ENCODE measurements at regions of chr13 and their contacts with region 1.

Region 1: DNA sequence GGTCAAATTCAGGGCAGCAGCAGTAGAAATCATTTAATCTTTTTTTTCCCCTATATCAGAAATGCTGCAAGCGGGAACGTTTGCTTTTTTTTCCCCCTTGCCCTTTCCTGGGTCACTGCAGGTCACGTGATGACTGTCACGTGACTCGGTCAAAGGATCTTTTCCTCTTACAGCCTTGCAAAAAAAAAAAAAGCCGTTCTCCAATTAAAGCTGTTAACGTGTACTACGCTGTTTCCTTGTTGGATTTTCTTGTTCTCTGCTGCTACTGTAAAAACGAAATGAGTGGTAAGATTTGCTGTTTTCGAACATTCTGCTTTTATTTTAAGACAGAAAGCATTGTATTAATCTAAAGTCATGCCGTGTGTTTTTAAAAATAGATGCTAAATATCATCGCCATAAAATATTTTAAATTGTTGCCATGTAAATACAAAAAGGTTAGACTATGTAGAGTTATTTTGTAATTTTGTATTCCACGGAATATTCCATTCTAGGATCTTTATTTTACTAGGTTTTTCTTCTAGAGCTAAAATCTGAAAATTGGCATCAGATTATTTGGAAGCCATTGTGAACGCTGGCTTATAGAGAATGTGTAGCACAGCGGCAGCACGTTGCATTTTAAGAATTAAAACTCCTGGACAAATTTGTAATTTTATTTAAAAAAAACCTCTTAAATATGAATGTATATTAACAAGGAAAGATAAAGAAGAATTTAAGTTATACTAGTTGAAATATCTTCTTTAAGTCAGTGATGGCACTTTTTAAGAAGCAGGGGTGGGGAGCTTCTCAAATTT is 109.8 kb upstream of the MLNR start:
- DNase-seq: peak; percentile 93
- H3K4me3 Mint-ChIP-seq: peak overlapping the region; percentile 81
- H3K27ac Mint-ChIP-seq: peak overlapping the region; percentile 68
- H3K4me1 Mint-ChIP-seq: peaks cover 19% of the 10 kb centered on the region
- H3K27me3 Mint-ChIP-seq: no peaks in the 10 kb centered on the region

Region 2: DNA sequence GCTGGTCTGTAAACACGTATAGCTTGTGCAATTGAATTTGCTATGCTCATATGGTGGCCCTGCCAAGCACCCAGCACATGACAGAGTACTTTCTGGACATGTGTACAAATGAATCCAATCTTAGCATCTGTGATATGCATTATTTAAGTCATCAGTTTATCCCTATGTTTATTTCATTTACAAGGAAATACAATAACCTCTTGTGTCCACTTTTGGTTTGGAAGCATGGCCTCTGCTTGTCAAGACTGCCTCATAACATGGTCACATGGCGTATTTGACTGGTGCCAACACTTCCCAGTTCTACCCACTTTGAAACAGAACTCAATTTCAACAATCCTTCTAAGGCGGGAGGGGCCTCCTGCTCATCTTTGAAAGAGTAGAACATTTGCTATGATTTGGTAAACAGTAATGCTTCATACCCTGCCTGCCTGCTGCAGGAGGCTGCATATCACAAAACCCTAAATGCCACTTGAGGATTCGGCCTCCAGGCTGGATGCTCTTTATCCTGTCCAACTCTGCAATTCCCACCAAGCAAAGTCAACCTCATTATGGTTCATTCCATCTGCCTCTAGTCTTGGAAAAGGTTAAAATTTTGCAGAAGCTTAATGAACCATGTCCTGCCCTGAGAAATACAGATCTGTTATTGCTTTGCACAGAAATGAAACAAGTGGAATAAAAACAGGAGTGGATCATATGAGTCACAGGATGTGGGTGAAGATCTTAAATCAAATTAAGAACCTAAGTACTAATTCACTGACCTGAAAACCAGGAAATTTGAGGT is 305.3 kb before region 1 on chr13:
- intact Hi-C with region 1: loop called (anchors 5 kb)
- DNase-seq: peak; percentile 61
- H3K4me3 Mint-ChIP-seq: peak overlapping the region; percentile 49
- H3K27ac Mint-ChIP-seq: peak overlapping the region; percentile 55
- H3K4me1 Mint-ChIP-seq: peaks cover 21% of the 10 kb centered on the region
- H3K27me3 Mint-ChIP-seq: no peaks in the 10 kb centered on the region